ENCODE measurements at regions of chr12 and their contacts with region 1.

Region 1: GRCh38 chr12:132700212-132700822 is 10.3 kb upstream of the PGAM5 start:
- DNase-seq: no peak
- H3K4me3 ChIP-seq: no peak overlapping the region
- H3K27ac ChIP-seq: no peak overlapping the region
- H3K4me1 ChIP-seq: no peaks in the 10 kb centered on the region; a peak in 1 of 7 replicates
- H3K27me3 ChIP-seq: no peaks in the 10 kb centered on the region
- CTCF ChIP-seq: no peak
- EP300 ChIP-seq: no peak
- POLR2A ChIP-seq: no peak
- RAD21 ChIP-seq: no peak

Region 2: DNA sequence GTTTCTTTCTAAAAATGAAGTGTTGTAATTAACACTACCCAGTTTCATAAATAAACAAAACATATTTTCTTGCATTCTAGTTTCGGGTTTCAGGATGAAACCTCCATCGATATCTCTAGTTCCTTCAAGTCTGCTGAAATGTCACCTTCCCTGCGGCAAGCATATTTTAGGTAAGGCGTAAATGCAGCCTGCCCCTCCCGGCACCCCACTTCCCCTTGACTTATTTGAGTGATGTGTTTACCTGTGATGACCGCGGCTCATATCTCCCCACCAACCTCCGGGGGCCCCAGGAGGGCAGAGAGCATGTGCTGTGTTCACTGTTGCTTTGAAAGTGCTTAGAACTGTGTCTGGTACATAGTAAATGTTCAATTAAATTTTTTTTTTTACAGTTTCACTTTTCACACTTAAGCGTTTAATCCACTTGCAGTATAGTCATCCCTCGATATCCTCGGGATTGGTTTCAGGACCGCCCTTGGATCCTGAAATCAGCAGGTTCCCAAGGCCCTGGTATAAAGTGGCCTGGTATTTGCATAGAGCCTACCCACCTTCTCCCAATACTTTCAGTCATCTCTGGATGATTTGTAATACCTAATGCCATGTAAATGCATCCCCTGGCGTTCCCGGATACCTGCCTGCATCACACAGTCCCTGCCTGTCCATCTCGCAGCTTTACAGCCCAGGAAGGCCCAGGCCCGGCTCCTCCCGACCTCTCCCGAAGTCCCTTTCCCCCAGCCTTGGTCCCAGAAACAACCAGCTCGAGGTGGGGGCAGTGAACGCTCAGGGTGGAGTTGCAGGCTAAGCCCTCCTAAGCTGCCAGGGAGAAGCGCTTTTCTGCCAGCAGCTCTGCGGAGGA is 250.5 kb before region 1 on chr12:
- CTCF ChIA-PET with region 1: no interaction called
- POLR2A ChIA-PET with region 1: no interaction called
- DNase-seq: no peak
- H3K4me3 ChIP-seq: no peak overlapping the region
- H3K27ac ChIP-seq: no peak overlapping the region
- H3K4me1 ChIP-seq: peaks cover 0 to 6% (median 3%) of the 10 kb centered on the region in 4 experiments; a peak in 4 of 7 replicates
- H3K27me3 ChIP-seq: peaks cover 7 to 66% (median 55%) of the 10 kb centered on the region in 4 experiments
- CTCF ChIP-seq: no peak
- EP300 ChIP-seq: no peak
- POLR2A ChIP-seq: no peak
- RAD21 ChIP-seq: no peak

Region 3: DNA sequence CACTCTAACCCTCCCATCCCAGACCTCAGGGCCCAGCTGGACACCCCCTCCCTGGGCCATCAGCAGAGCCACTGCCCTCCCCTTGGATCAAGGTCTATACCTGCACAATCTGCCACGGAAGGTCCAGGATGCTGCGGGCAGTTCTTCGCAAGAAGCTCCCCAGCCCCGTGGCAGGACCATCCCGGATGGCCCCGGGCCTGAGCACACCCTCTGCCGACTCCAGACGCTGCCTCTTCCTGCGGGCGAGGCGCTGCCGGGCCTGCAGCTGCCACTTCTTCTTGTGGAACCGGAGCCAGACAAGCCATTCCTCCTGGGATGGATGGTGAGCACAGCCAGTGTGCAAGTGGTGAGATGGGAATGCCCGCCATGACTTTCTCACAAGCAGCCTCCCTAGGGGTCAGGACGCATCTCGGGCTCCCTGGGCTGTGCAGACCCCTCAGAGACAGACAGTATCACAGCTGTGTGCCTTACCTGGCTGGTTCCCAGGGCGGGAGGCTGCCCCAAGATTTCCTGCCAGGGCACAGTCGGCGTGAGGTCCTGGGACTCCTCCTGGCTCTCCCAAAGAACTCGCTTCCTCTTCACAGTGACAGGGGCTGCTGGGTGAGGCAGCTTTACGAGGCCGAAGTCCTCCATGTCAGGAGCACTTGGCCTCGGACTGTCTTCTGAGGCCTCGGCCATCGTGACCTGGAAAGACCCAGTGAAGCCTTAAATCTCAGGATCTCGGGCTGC is 50.9 kb before region 1 on chr12:
- CTCF ChIA-PET with region 1: no interaction called
- POLR2A ChIA-PET with region 1: no interaction called
- DNase-seq: no peak
- H3K4me3 ChIP-seq: no peak overlapping the region
- H3K27ac ChIP-seq: no peak overlapping the region
- H3K4me1 ChIP-seq: no peaks in the 10 kb centered on the region
- H3K27me3 ChIP-seq: no peaks in the 10 kb centered on the region
- CTCF ChIP-seq: no peak
- EP300 ChIP-seq: no peak
- POLR2A ChIP-seq: no peak
- RAD21 ChIP-seq: no peak

Region 4: DNA sequence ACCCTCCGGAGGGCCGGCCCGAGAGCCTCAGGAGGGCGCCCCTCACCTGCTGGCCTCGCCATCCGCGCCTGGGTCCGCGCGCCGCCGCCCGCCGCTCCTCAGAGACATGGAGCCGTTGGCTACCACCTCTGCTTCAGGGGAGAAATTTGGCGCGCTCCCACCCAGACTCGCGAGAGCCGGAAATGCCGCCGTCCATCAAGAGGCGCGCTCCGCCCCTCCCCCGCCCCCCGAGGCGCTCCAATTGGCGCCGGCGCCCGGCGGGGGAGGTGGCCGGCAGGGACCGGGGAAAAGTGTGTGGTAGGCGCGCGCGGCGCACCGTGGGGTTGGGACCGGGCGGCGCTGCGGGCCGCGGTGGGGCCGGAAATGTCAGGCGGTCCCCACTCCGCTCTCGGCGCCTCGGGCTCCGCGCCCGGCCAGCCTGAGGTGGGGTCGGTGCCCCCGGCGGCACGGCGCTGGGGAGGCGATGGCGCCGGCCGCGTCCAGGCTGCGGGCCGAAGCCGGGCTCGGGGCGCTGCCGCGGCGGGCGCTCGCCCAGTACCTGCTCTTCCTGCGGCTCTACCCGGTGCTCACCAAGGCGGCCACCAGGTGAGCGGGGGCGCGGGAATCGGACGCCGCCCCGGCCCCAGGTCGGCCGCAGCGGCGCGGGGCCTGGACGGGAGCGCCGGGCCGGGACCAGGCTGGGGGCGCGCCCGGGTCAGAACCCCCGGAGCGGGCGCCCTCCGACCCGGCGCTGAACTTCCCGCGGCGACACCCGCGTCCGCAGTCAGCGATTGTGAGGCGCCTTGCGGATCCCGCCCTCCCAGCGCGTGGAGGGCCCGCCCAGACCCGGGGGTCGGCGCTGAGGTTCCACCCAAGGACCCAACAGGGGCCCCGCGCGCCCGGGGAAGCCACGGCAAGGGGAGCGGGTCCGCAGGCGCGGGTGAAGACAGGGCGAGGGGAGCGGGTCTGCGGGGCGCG is 12.8 kb before region 1 on chr12 and contains the starts of genes POLE and PXMP2:
- CTCF ChIA-PET with region 1: interaction called, 3 read pairs
- POLR2A ChIA-PET with region 1: interaction called, 24 read pairs
- DNase-seq: peak; percentile 76 to 94
- H3K4me3 ChIP-seq: peak within 1 kb of the TSS; percentile 59 to 88 (median 66)
- H3K27ac ChIP-seq: peak within 1 kb of the TSS; percentile 89; the same call in 1 of the 2 replicates
- H3K4me1 ChIP-seq: peaks cover 0 to 2% (median 0%) of the 10 kb centered on the region in 4 experiments; a peak in 1 of 7 replicates
- H3K27me3 ChIP-seq: peaks cover 2 to 9% (median 6%) of the 10 kb centered on the region in 4 experiments; a peak in 6 of 7 replicates
- CTCF ChIP-seq: no peak
- EP300 ChIP-seq: peak in 1 of 2 experiments; percentile 35; a peak in 1 of 3 replicates
- POLR2A ChIP-seq: peak; percentile 80 to 84
- RAD21 ChIP-seq: no peak
- total RNA-seq, gene POLE: 111 and 115 TPM in 2 replicates
- total RNA-seq, gene PXMP2: 15.1 and 17.5 TPM in 2 replicates

Measured in H1 (cell line).